Lower leg skin (tissue), 4 donors: ENCODE measurements at regions of chr5 and their contacts with region 1.

Region 1: DNA sequence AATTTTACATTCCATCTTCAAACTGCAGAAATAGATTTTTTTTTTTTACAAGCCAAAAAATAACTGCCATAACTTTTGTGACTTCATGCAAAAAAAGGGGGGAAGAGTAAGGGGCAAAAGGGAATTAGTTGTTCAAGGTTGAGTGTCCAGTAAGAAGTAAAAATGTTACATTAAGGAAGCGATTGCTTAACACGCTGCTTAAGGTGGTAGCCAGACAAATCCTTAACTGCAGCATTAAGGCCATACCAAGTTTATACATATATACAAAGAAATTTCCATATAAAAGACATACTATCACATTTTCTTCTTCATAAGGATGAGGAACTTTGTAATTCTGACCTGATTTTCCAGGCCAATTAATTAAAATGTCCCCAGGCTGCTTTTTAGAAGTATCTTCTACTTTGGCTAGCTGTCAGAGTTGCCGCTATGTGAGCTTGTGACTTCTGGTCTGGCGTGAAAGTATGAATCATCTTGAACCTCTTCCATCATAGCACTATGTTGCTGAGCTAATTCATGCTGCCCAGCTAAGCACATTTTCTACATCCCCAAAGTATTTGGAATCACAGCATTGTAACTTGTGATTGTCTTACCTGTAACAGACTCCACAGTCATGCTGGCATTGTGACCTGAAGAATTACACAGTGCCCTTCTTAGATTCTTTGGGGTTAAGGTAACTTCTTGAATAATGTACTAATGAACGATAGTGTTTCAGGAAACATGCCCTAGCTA is 40.0 kb downstream of the G3BP1 start:
- DNase-seq: peak in 1 of 2 donors; percentile 28
- H3K4me3 ChIP-seq: no peak overlapping the region
- CTCF ChIP-seq: no peak
- POLR2A ChIP-seq: no peak

Region 2: GRCh38 chr5:153767221-153768188 is 1955.7 kb after region 1 on chr5:
- intact Hi-C with region 1: loop called (anchors 5 kb)
- DNase-seq: no peak
- H3K4me3 ChIP-seq: no peak overlapping the region
- CTCF ChIP-seq: no peak
- POLR2A ChIP-seq: no peak